B cell (primary cell): ENCODE measurements at regions of chr14 and their contacts with region 1.

Region 1: DNA sequence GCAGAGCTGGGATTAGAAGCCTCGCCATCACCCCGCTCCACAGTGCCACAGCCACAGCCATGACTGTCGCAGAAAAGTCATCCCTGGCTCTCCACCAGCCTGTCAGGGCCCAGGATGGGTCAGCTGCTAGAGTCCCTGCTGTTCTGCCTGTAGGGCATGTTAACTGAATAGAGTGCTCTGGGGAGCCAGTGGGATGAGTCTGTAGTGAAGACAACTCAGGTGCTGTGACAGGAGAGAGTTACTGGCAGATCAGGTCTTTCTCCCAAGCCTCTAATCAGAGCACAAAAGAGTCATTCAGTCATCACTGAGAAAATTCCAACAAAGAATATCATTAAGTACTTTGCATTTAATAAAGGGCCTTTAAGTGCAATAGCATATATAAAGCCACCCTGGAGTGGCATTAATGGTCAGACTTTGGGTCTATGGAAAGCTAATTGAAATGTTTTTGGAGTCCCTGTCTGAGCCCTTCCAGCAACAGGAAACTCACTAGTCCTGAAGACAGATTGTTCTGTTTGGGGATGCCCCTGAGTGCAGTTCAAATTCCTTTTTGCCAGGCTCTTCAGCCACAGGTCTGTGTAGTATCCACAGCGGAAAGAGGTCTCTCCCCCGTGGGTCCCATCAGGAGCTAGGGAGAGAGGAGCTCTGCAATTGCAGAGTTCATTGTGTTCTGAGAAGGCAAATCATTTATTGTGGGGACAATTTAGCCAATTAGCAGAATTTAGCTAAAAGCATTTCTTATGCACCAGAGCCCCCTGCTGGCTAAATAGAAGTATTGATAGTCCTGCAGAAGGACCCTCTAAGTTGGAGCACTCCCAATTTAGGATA is 45.2 kb upstream of the C14orf132 start:
- DNase-seq: peak; percentile 72
- ATAC-seq: no peak
- H3K4me3 ChIP-seq: no peak overlapping the region
- H3K4me3 Mint-ChIP-seq: no peak overlapping the region
- H3K27ac ChIP-seq: no peak overlapping the region
- H3K27ac Mint-ChIP-seq: no peak overlapping the region
- H3K4me1 ChIP-seq: peaks cover 3% of the 10 kb centered on the region in 2 donors
- H3K4me1 Mint-ChIP-seq: no peaks in the 10 kb centered on the region
- H3K27me3 ChIP-seq: peaks cover 0 to 24% (median 13%) of the 10 kb centered on the region in 4 experiments
- H3K27me3 Mint-ChIP-seq: peaks cover 42% of the 10 kb centered on the region
- CTCF ChIP-seq: peak; percentile 95

Region 2: DNA sequence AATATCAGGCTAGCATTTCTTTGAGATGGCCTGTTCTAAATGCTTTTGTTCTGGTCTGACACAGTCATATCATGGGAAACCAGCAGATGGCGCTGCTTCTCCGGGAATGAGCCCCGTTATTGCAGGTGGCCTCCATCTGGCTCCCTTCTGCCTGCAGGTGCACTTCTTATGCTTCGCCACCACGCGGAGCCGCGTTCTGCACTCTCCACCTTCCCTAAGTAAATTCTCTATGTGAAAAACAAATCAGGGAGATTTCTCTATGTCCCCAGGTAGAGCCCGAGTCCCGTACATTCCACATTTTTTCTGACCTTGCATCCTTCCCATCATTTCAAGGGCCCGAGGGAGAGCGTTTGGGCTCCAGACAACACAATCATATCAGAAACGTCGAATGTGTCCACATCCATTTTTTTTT is 433.0 kb before region 1 on chr14:
- CTCF ChIA-PET with region 1: interaction called, 160 read pairs
- POLR2A ChIA-PET with region 1: no interaction called
- intact Hi-C with region 1: no loop called
- DNase-seq: peak; percentile 91
- ATAC-seq: peak; percentile 97
- H3K4me3 ChIP-seq: no peak overlapping the region
- H3K4me3 Mint-ChIP-seq: no peak overlapping the region
- H3K27ac ChIP-seq: no peak overlapping the region
- H3K27ac Mint-ChIP-seq: peak overlapping the region; percentile 4
- H3K4me1 ChIP-seq: peaks cover 0 to 3% of the 10 kb centered on the region in 2 donors
- H3K4me1 Mint-ChIP-seq: peaks cover 4% of the 10 kb centered on the region
- H3K27me3 ChIP-seq: peaks cover 0 to 14% (median 6%) of the 10 kb centered on the region in 4 experiments
- H3K27me3 Mint-ChIP-seq: peaks cover 23% of the 10 kb centered on the region
- CTCF ChIP-seq: peak; percentile 99

Region 3: GRCh38 chr14:95697764-95698163 is 296.2 kb before region 1 on chr14:
- CTCF ChIA-PET with region 1: no interaction called
- POLR2A ChIA-PET with region 1: no interaction called
- intact Hi-C with region 1: loop called (anchors 1 kb)
- DNase-seq: peak; percentile 76
- ATAC-seq: peak; percentile 64
- H3K4me3 ChIP-seq: peak overlapping the region in 3 of 5 experiments; percentile 9 to 56 (median 16)
- H3K4me3 Mint-ChIP-seq: peak overlapping the region; percentile 81
- H3K27ac ChIP-seq: peak overlapping the region; percentile 87 to 94
- H3K27ac Mint-ChIP-seq: peak overlapping the region; percentile 95
- H3K4me1 ChIP-seq: peaks cover 100% of the 10 kb centered on the region in 2 donors
- H3K4me1 Mint-ChIP-seq: peaks cover 83% of the 10 kb centered on the region
- H3K27me3 ChIP-seq: no peaks in the 10 kb centered on the region
- H3K27me3 Mint-ChIP-seq: peaks cover 34% of the 10 kb centered on the region
- CTCF ChIP-seq: peak; percentile 19

Region 4: GRCh38 chr14:96275177-96276112 is 281.5 kb after region 1 on chr14:
- CTCF ChIA-PET with region 1: interaction called, 9 read pairs
- POLR2A ChIA-PET with region 1: no interaction called
- intact Hi-C with region 1: loop called (anchors 2 kb)
- DNase-seq: peak; percentile 63
- ATAC-seq: peak; percentile 33
- H3K4me3 ChIP-seq: no peak overlapping the region
- H3K4me3 Mint-ChIP-seq: no peak overlapping the region
- H3K27ac ChIP-seq: no peak overlapping the region
- H3K27ac Mint-ChIP-seq: no peak overlapping the region
- H3K4me1 ChIP-seq: no peaks in the 10 kb centered on the region
- H3K4me1 Mint-ChIP-seq: no peaks in the 10 kb centered on the region
- H3K27me3 ChIP-seq: no peaks in the 10 kb centered on the region
- H3K27me3 Mint-ChIP-seq: no peaks in the 10 kb centered on the region
- CTCF ChIP-seq: peak; percentile 75